Activated naive CD4-positive, alpha-beta T cell treated with anti-CD3 and anti-CD28 coated beads for 36 hours (primary cell): ENCODE measurements at regions of chr6 and their contacts with region 1.

Region 1: GRCh38 chr6:75643173-75643572 is 41.5 kb downstream of the SENP6 start:
- DNase-seq: no peak
- H3K4me3 Mint-ChIP-seq: no peak overlapping the region
- H3K27ac Mint-ChIP-seq: no peak overlapping the region
- H3K4me1 Mint-ChIP-seq: no peaks in the 10 kb centered on the region
- H3K27me3 Mint-ChIP-seq: no peaks in the 10 kb centered on the region

Region 2: DNA sequence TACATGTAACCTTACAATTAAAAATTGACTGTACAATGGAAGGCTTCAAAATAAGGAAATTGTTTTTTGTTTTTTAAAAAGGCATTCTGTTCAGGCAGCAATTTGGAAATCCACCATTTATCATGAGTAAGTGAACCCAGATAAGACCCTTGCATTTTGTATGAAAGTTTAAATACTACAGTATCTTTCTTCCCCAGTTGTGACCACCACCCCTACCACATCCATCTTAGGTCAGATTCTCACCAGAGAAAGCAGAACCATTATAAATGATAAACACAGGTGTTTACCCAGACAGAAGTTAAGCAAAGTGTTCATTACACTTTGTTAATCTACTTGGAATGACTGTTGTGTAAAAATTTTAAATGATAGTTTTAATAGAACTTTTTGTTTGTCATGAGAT is 21.3 kb before region 1 on chr6:
- CTCF ChIA-PET with region 1: no interaction called
- intact Hi-C with region 1: no loop called
- DNase-seq: no peak
- H3K4me3 Mint-ChIP-seq: no peak overlapping the region
- H3K27ac Mint-ChIP-seq: no peak overlapping the region
- H3K4me1 Mint-ChIP-seq: peaks cover 44% of the 10 kb centered on the region
- H3K27me3 Mint-ChIP-seq: no peaks in the 10 kb centered on the region

Region 3: DNA sequence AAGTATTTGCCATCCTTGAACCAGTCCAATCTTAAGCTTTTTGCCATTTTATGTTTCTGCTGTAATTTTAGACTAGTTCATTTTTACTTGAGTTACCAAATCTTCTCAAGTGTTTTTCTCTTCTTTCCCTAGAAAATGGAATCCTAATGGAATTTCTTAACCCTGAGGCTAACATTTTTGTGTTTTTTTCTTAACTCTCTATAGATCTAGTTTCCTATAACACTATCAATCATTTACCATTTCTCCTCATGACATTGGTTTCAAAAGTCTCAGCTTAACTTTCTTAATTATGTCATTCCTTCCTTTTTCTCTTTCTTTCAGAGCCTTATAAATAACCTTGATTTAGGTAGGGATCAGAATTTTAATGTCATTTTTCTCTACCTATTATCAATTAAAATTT is 13.3 kb after region 1 on chr6:
- CTCF ChIA-PET with region 1: interaction called, 3 read pairs
- intact Hi-C with region 1: loop called (anchors 2 kb)
- DNase-seq: no peak
- H3K4me3 Mint-ChIP-seq: no peak overlapping the region
- H3K27ac Mint-ChIP-seq: no peak overlapping the region
- H3K4me1 Mint-ChIP-seq: peaks cover 13% of the 10 kb centered on the region
- H3K27me3 Mint-ChIP-seq: no peaks in the 10 kb centered on the region

Region 4: GRCh38 chr6:75874224-75874623 is 231.1 kb after region 1 on chr6:
- CTCF ChIA-PET with region 1: no interaction called
- intact Hi-C with region 1: no loop called
- DNase-seq: no peak
- H3K4me3 Mint-ChIP-seq: no peak overlapping the region
- H3K27ac Mint-ChIP-seq: no peak overlapping the region
- H3K4me1 Mint-ChIP-seq: no peaks in the 10 kb centered on the region
- H3K27me3 Mint-ChIP-seq: no peaks in the 10 kb centered on the region